ENCODE measurements at regions of chr2 and their contacts with region 1.

Region 1: DNA sequence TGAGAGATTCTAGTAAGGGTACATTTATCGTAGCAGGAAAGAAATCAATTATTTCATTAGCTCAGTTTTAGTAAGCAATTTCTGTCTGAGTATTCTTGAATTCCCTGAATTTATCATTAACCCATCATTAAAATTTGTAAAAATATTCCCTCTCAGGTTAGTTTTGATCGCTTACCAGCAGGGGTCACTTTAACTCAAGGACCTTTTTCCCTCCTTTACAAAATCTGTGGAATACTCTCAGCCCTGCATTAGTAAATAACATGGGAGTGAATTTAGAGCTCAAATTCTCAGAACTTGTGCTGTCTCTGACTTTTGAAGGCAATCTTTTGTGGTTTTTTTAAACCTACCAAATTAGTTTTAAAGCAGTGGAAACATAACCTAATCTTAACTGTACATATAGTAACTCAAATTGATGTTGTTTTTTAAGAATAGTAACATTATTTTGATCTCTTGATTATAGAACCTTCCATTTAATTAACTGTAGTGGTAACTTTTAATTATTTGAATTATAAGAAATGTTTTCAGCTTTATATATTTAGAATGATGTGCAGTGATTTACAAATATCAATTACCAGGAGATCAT is 97.2 kb downstream of the AGPS start:
- DNase-seq: peak; percentile 55
- H3K4me3 ChIP-seq: no peak overlapping the region
- H3K27ac ChIP-seq: no peak overlapping the region
- H3K4me1 ChIP-seq: no peaks in the 10 kb centered on the region
- H3K27me3 ChIP-seq: no peaks in the 10 kb centered on the region
- CTCF ChIP-seq: peak; percentile 42 to 45
- POLR2A ChIP-seq: no peak

Region 2: DNA sequence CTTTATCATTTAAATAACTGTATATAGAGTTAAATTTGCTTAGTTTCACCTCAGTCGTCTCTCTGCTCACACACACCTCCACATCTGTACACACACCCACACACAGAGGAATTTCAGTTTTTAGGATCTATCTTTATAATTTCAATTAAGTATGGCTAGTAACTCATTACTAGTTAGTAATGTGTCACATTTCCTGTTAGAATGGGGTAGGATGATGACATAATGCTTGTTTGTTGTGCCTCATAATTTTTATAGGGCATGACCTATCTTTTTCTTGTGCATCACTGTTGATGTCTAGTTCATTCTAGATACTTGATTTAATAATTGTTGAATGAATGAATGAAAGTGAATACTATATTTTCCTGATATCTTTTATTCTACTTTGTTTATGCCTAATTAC is 11.4 kb after region 1 on chr2:
- CTCF ChIA-PET with region 1: interaction called, 20 read pairs
- POLR2A ChIA-PET with region 1: no interaction called
- dilution Hi-C with region 1: no loop called
- intact Hi-C with region 1: no loop called
- DNase-seq: peak; percentile 24
- H3K4me3 ChIP-seq: no peak overlapping the region
- H3K27ac ChIP-seq: no peak overlapping the region
- H3K4me1 ChIP-seq: peaks cover 8% of the 10 kb centered on the region
- H3K27me3 ChIP-seq: no peaks in the 10 kb centered on the region
- CTCF ChIP-seq: no peak
- POLR2A ChIP-seq: no peak

Region 3: DNA sequence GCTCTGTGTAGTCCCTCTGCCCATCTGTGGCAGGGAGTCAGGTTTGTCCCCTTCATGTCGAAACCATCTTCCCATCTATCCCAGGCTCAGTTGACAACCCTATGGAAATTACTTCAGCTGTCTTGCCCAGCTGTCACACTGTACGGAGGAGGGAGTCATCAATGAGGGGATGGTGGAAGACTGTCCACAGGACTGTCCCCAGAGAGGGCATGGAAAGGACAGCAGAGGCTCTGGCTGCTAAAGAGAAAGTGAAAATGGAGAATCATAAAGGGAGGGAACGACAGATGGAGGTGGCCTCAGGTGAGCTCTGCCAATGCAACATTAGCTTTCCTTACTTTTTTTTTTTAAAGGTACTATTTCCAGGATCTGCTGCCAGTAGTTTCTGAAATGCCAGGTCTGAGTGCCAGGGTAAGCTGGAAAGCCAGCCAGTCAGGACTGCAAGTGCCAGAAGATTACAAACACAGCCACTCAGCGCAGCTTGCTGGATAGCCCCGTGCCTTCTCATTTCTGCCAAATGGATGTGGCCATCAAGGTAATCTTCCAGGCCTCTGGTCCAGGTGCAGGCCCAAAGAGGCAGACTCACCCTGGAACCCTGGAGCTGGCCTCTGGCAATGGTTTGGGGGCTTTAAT is 95.5 kb after region 1 on chr2:
- CTCF ChIA-PET with region 1: no interaction called
- POLR2A ChIA-PET with region 1: no interaction called
- dilution Hi-C with region 1: no loop called
- intact Hi-C with region 1: no loop called
- DNase-seq: no peak
- H3K4me3 ChIP-seq: no peak overlapping the region
- H3K27ac ChIP-seq: no peak overlapping the region
- H3K4me1 ChIP-seq: no peaks in the 10 kb centered on the region
- H3K27me3 ChIP-seq: no peaks in the 10 kb centered on the region
- CTCF ChIP-seq: no peak
- POLR2A ChIP-seq: no peak

Measured in endothelial cell of umbilical vein (primary cell).